ENCODE measurements at regions of chr5 and their contacts with region 1.

Region 1: DNA sequence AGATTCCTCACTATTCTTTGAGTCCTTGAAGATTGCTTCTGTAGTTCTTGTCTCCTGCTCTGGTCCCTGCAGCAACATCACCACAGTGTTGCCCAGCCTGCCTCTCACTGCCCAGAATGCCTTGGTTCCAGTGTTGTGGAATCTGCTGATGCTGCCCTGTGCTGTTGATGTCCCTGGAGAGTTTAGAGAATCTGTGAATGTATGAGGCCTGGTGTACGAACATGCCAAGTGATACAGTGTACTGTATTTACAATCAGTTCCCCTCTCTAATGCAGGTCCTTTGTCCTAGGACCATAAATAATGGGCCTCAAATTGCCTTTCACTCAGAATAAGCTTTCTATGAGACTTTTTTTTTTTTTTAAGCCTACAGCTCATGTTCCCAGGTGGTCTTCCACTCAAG is 8.2 kb downstream of the SV2C start:
- DNase-seq: no peak
- H3K4me3 Mint-ChIP-seq: no peak overlapping the region
- H3K27ac Mint-ChIP-seq: no peak overlapping the region
- H3K4me1 Mint-ChIP-seq: peaks cover 7% of the 10 kb centered on the region
- H3K27me3 Mint-ChIP-seq: peaks cover 17% of the 10 kb centered on the region
- CTCF ChIP-seq: no peak

Region 2: GRCh38 chr5:76125888-76126287 is 34.5 kb after region 1 on chr5:
- CTCF ChIA-PET with region 1: no interaction called
- intact Hi-C with region 1: loop called (anchors 1 kb)
- DNase-seq: no peak
- H3K4me3 Mint-ChIP-seq: no peak overlapping the region
- H3K27ac Mint-ChIP-seq: no peak overlapping the region
- H3K4me1 Mint-ChIP-seq: no peaks in the 10 kb centered on the region
- H3K27me3 Mint-ChIP-seq: peaks cover 75% of the 10 kb centered on the region
- CTCF ChIP-seq: no peak

Region 3: GRCh38 chr5:76204719-76205118 is 113.4 kb after region 1 on chr5:
- CTCF ChIA-PET with region 1: no interaction called
- intact Hi-C with region 1: no loop called
- DNase-seq: peak; percentile 62
- H3K4me3 Mint-ChIP-seq: no peak overlapping the region
- H3K27ac Mint-ChIP-seq: no peak overlapping the region
- H3K4me1 Mint-ChIP-seq: peaks cover 11% of the 10 kb centered on the region
- H3K27me3 Mint-ChIP-seq: no peaks in the 10 kb centered on the region
- CTCF ChIP-seq: no peak